Left colon (tissue), 2 donors: ENCODE measurements at regions of chr1 and their contacts with region 1.

Region 1: DNA sequence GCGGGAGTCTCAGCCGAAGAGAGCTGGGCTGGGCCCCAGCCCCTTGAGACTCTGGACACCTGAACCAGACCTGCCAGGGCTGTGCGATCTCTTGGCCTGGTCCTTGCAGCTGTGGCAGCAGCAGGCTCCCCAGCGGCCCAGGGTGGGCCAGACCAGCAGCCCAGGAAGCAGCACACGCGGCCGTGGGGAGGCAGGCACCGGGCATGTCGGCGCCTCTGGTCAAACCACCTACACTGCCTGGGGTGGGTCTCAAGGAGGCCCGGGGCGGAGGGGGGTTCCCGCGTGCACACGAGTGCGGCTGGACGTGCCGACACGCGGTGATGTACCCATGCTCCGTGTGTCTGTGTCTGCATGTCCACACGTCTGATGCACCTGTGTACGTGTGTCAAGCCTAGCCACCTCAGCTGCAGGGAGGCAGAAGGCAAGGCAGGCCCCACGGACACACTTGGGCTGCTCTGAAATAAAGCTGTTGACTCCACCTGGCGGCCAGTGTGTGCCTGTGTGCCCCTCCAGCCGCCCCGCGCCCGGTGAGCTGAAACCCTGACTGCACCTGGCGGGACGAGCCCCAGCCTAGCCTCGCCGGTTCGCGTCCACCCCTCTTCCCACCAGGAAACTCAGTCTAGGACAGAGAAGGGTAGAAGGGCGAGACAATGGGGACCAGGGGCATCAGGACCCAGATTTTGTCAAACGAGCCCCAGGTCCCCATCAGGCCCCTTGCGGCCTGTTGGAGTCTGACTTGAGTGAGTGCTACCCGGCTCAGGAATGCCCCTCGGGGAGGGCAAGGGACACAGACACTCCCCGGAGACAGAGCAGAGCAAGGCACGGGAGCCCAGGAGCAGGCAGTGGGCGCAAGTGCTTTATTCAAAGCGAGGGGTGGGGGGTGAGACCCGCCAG is 11.6 kb downstream of the SCNN1D start:
- DNase-seq: peak; percentile 74 to 90
- ATAC-seq: peak; percentile 86

Region 2: DNA sequence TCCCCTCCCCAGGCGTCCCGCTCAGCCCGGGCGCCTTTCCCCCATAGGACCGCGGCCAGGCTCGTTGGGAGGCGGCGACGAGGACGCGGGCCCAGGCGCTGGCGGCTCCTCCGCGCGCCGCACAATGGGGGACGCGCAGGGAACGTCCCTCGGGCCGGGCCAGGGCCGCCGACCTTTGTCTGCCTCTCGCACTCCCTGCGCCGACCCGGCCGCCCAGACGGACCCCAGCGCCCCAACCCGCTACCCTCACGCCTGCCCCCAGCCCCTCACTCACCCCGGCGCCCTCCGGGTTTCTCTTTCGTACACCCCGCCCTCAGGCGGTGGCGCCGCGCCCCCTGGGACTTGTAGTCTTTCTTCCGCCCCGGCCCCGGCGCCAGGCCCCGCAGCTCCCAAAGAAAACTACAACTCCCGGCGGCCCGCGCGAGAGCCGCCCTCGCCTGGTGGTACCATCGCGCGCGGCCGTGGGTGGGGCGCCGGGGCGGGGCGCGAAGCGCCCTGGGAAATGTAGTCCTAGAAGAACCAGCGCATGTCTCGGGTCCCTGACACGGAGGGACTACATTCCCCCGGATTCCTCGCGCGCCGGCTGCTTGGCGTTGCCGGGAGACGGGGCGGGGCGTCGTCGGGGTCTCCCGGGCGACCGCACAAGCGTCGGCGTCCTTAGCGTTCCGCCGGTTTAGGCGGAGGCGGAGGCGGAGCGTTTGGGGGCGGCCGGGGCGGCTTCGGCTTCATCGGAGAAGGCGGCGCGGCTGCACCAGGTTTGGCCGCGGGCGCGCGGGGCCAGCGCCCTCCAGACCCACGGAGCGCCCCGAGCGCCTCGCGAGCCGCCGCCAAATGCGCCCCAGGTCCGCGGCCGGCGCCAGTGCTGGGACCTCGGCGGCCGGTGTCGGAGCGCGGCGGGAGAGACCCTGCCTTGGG is 175.8 kb before region 1 on chr1 and contains the start of gene C1orf159:
- intact Hi-C with region 1: loop called (anchors 5 kb)
- DNase-seq: peak; percentile 98 to 99
- ATAC-seq: peak; percentile 95
- total RNA-seq, gene C1orf159: 17.6 to 28.6 TPM

Region 3: DNA sequence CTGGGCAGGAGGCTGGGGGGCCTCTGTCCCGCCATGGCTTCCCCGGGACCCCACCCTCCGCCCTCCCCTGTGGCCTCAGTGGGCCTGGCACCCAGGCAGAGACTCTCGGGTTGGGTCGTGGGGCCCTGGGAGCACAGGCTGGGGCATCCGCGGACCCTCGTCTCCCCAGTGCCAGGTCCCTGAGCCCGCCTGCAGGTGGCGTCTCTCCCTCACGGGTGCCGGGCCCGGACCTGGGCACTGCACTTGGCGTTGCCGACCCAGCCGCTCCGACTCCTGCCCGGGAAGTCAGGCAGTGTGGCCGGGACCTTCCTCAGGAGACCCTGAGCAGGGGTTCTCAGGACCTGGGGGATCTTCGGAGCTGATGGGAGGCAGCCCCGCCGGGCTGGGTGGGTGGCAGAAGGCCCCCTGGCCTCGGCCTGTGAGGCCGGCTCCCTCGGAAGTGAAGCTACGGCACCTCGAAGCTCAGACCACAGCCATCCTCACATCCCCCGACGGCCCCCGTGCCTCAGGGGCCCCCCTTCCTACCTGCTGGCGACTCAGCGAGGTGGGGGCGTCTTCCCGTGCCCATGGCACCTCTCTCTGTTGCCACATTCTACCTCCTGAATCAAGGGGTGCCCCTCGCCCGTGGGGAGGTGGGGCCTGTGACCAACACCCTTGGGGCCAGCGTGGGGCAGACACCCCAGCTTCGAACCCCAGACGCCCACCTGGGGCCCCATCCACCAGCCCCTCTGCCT is 169.6 kb before region 1 on chr1:
- intact Hi-C with region 1: loop called (anchors 5 kb)
- DNase-seq: peak; percentile 80 to 92
- ATAC-seq: peak; percentile 49